Caco-2 (cell line): ENCODE measurements at regions of chr12 and their contacts with region 1.

Region 1: DNA sequence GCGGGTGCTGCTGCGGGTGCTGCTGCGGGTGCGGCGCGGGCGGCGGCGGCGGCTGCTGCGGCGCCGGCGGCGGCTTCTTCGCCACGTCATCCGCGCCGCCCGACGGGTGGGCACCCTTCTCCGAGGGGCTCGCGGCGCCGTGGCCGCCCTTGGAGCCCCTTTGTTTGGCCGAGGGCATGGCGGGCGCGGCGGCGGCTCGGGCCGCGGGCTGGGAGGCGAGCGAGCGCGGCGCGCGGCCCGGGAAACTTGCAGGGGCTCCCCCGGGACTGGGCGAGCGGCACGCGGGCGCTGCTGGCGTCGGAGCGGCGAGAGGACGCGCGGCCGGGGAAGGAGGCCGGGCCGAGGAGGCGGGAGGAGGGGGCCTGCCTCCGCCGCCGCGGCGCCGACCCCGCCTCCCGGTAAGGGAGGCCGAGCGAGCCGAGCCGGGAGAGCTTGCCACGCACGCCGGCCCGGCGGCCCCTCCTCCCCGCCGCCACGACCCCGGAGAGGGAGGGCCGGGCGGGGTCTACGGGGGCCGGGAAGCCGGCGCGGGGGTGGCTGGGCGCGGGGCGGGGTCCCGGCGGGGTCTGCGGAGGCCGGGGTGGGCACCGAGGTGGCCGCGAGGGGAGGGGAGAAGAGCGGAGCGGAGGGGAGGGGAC is at the start of gene CKAP4:
- DNase-seq: peak; percentile 62 to 85
- H3K4me3 ChIP-seq: peak within 1 kb of the TSS; percentile 92
- H3K4me3 Mint-ChIP-seq: peak within 1 kb of the TSS; percentile 69
- H3K27ac Mint-ChIP-seq: no peak within 1 kb of the TSS
- H3K4me1 ChIP-seq: peaks cover 23% of the 10 kb centered on the region
- H3K4me1 Mint-ChIP-seq: peaks cover 21% of the 10 kb centered on the region
- H3K27me3 ChIP-seq: no peaks in the 10 kb centered on the region
- H3K27me3 Mint-ChIP-seq: no peaks in the 10 kb centered on the region
- CTCF ChIP-seq: no peak
- total RNA-seq, gene CKAP4: 60.8 and 63.1 TPM in 2 replicates

Region 2: DNA sequence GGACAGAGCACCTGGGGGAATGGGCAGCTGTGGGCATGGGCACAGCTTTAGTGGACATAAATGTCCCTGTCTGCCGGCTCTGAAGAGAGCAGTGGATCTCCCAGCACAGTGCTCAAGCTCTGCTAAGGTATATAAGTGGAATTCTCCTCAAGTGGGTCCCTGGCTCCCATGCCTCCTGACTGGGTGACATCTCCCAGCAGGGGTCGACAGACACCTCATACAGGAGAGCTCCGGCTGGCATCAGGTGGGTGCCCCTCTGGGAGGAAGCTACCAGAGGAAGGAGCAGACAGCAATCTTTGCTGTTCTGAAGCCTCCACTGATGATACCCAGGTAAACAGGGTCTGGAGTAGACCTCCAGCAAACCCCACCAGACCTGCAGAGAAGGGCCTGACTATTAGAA is 84.1 kb before region 1 on chr12:
- CTCF ChIA-PET with region 1: no interaction called
- POLR2A ChIA-PET with region 1: no interaction called
- intact Hi-C with region 1: no loop called
- DNase-seq: no peak
- H3K4me3 ChIP-seq: no peak overlapping the region
- H3K4me3 Mint-ChIP-seq: no peak overlapping the region
- H3K27ac Mint-ChIP-seq: no peak overlapping the region
- H3K4me1 ChIP-seq: no peaks in the 10 kb centered on the region
- H3K4me1 Mint-ChIP-seq: no peaks in the 10 kb centered on the region
- H3K27me3 ChIP-seq: no peaks in the 10 kb centered on the region
- H3K27me3 Mint-ChIP-seq: peaks cover 1% of the 10 kb centered on the region
- CTCF ChIP-seq: no peak

Region 3: GRCh38 chr12:106205208-106206071 is 42.4 kb before region 1 on chr12:
- CTCF ChIA-PET with region 1: no interaction called
- POLR2A ChIA-PET with region 1: no interaction called
- intact Hi-C with region 1: no loop called
- DNase-seq: no peak
- H3K4me3 ChIP-seq: no peak overlapping the region
- H3K4me3 Mint-ChIP-seq: no peak overlapping the region
- H3K27ac Mint-ChIP-seq: no peak overlapping the region
- H3K4me1 ChIP-seq: no peaks in the 10 kb centered on the region
- H3K4me1 Mint-ChIP-seq: no peaks in the 10 kb centered on the region
- H3K27me3 ChIP-seq: no peaks in the 10 kb centered on the region
- H3K27me3 Mint-ChIP-seq: peaks cover 11% of the 10 kb centered on the region
- CTCF ChIP-seq: no peak

Region 4: GRCh38 chr12:106274575-106275121 is 26.9 kb after region 1 on chr12:
- CTCF ChIA-PET with region 1: no interaction called
- POLR2A ChIA-PET with region 1: interaction called, 4 read pairs
- intact Hi-C with region 1: loop called (anchors 2 kb)
- DNase-seq: peak; percentile 53 to 56
- H3K4me3 ChIP-seq: no peak overlapping the region
- H3K4me3 Mint-ChIP-seq: peak overlapping the region; percentile 56
- H3K27ac Mint-ChIP-seq: peak overlapping the region; percentile 80
- H3K4me1 ChIP-seq: peaks cover 34% of the 10 kb centered on the region
- H3K4me1 Mint-ChIP-seq: peaks cover 36% of the 10 kb centered on the region
- H3K27me3 ChIP-seq: no peaks in the 10 kb centered on the region
- H3K27me3 Mint-ChIP-seq: no peaks in the 10 kb centered on the region
- CTCF ChIP-seq: no peak

Region 5: GRCh38 chr12:106282457-106283097 is 34.8 kb after region 1 on chr12:
- CTCF ChIA-PET with region 1: interaction called, 7 read pairs
- POLR2A ChIA-PET with region 1: no interaction called
- intact Hi-C with region 1: loop called (anchors 2 kb)
- DNase-seq: peak; percentile 70 to 73
- H3K4me3 ChIP-seq: no peak overlapping the region
- H3K4me3 Mint-ChIP-seq: no peak overlapping the region
- H3K27ac Mint-ChIP-seq: peak overlapping the region; percentile 35
- H3K4me1 ChIP-seq: peaks cover 34% of the 10 kb centered on the region
- H3K4me1 Mint-ChIP-seq: peaks cover 39% of the 10 kb centered on the region
- H3K27me3 ChIP-seq: no peaks in the 10 kb centered on the region
- H3K27me3 Mint-ChIP-seq: no peaks in the 10 kb centered on the region
- CTCF ChIP-seq: peak; percentile 68 to 88

Region 6: DNA sequence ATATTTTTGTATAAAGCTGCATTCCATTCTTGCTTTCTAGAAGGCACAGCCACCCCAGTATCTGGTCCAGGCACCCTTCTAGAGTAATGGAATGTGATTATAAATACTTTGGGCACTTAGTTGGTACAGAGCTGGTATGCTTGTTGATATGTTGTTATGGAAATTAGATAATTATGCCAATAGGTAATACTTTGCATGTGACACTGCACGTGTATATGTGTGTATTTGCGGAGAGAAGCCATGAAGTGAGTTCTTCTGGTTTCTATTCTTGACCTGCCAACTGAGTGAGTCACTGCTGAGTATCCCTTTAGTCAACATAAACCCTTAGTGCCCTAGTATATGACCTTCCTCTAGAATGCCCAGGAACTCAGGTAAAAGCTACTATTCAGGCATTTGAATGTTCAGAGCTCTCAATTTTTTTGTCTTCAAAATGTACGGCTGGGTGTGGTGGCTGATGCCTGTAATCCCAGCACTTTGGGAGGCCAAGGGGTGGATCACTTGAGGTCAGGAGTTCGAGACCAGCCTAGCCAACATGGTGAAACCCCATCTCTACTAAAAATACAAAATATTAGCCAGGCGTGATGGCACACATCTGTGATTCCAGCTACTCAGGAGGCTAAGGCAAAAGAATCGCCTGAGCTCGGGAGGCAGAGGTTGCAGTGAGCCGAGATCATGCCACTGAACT is 48.5 kb after region 1 on chr12:
- CTCF ChIA-PET with region 1: no interaction called
- POLR2A ChIA-PET with region 1: no interaction called
- intact Hi-C with region 1: loop called (anchors 1 kb)
- DNase-seq: no peak
- H3K4me3 ChIP-seq: no peak overlapping the region
- H3K4me3 Mint-ChIP-seq: no peak overlapping the region
- H3K27ac Mint-ChIP-seq: no peak overlapping the region
- H3K4me1 ChIP-seq: peaks cover 3% of the 10 kb centered on the region
- H3K4me1 Mint-ChIP-seq: peaks cover 2% of the 10 kb centered on the region
- H3K27me3 ChIP-seq: no peaks in the 10 kb centered on the region
- H3K27me3 Mint-ChIP-seq: no peaks in the 10 kb centered on the region
- CTCF ChIP-seq: no peak